Activated T-helper 1 cell treated with anti-CD3 and anti-CD28 coated beads, Interleukin-12 subunit alpha, Interleukin-12 subunit beta, Interleukin-2, Interleukin-4 antibody, amounts not matched to agents 30 ng/mL and 10 ng/mL and 1 ng/mL, durations not matched to agents 14 hours and 24 hours and 36 hours (primary cell): ENCODE measurements at regions of chr7 and their contacts with region 1.

Region 1: DNA sequence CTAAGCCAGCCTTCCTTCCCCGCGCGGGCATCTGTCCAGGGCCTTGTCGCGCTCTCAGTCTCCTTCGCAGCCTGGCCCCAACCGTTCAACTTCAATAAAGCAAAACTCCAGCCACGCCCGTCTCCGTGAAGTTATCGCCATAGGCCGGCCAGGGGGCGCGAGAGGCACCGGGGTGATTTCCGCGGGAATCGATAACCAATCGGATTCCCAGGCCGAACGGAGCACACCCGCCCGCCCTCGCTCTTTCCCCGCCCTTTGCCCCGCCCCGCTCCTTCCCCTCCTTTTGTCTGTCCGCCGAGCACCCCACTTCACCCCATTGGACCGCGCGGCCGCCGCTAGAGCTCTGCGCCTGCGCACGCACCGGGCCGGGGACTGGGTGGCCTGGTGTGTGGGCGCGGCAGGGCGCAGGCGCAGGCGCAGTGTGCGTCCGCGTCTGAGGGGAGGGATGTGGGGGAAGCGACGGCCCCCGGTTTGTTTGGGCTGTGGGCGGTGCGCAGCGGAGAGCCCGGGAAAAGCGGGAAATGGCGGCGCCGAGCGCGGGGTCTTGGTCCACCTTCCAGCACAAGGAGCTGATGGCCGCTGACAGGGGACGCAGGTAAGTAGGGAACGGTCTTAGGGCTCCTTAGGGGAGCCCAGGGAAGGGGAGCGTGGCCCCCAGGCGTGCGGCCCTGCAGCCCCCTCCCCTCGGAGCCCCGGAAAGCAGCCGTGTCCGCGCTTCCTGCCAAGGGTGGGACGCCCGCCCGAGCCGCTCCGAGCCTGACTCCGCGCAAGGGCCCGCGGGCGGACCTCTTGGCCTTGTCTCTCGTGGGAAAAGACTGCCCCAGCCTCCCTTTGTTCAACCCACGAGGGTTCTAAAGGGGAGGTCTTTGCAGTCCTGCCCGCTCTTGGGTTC is at the start of gene CASP2:
- DNase-seq: peak; percentile 98
- H3K4me3 Mint-ChIP-seq: peak within 1 kb of the TSS; percentile 94
- H3K27ac Mint-ChIP-seq: peak within 1 kb of the TSS; percentile 92
- H3K4me1 Mint-ChIP-seq: peaks cover 63% of the 10 kb centered on the region
- H3K27me3 Mint-ChIP-seq: no peaks in the 10 kb centered on the region
- total RNA-seq, gene CASP2: 107 and 110 TPM in 2 replicates

Region 2: GRCh38 chr7:143263266-143264195 is 24.6 kb before region 1 on chr7 and contains the start of gene GSTK1:
- intact Hi-C with region 1: loop called (anchors 1 kb)
- DNase-seq: peak; percentile 81
- H3K4me3 Mint-ChIP-seq: peak within 1 kb of the TSS; percentile 98
- H3K27ac Mint-ChIP-seq: peak within 1 kb of the TSS; percentile 94
- H3K4me1 Mint-ChIP-seq: peaks cover 67% of the 10 kb centered on the region
- H3K27me3 Mint-ChIP-seq: no peaks in the 10 kb centered on the region
- total RNA-seq, gene GSTK1: 134 and 135 TPM in 2 replicates

Region 3: DNA sequence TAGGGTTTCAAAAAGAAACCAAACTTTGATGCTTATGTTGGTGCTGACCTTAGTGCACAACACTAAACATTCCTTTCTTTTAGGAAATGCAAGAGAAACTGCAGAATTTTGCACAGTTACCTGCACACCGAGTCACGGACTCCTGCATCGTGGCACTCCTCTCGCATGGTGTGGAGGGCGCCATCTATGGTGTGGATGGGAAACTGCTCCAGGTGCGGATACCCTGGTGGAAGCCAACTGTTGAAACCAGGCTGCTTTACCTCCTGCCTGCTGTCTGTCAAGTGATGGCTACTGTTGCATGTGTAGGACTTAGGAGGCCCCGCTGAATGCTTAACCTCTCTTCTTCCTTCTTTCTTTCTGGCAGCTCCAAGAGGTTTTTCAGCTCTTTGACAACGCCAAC is 11.7 kb after region 1 on chr7:
- intact Hi-C with region 1: loop called (anchors 1 kb)
- DNase-seq: peak; percentile 45
- H3K4me3 Mint-ChIP-seq: no peak overlapping the region
- H3K27ac Mint-ChIP-seq: no peak overlapping the region
- H3K4me1 Mint-ChIP-seq: peaks cover 57% of the 10 kb centered on the region
- H3K27me3 Mint-ChIP-seq: no peaks in the 10 kb centered on the region

Region 4: GRCh38 chr7:144137501-144137900 is 849.3 kb after region 1 on chr7:
- intact Hi-C with region 1: no loop called
- DNase-seq: no peak
- H3K4me3 Mint-ChIP-seq: no peak overlapping the region
- H3K27ac Mint-ChIP-seq: no peak overlapping the region
- H3K4me1 Mint-ChIP-seq: no peaks in the 10 kb centered on the region
- H3K27me3 Mint-ChIP-seq: peaks cover 4% of the 10 kb centered on the region

Region 5: GRCh38 chr7:144818511-144818910 is 1530.3 kb after region 1 on chr7:
- intact Hi-C with region 1: loop called (anchors 10 kb)
- DNase-seq: peak; percentile 49
- H3K4me3 Mint-ChIP-seq: peak overlapping the region; percentile 9
- H3K27ac Mint-ChIP-seq: peak overlapping the region; percentile 83
- H3K4me1 Mint-ChIP-seq: peaks cover 71% of the 10 kb centered on the region
- H3K27me3 Mint-ChIP-seq: no peaks in the 10 kb centered on the region